ENCODE measurements at regions of chr20 and their contacts with region 1.

Region 1: DNA sequence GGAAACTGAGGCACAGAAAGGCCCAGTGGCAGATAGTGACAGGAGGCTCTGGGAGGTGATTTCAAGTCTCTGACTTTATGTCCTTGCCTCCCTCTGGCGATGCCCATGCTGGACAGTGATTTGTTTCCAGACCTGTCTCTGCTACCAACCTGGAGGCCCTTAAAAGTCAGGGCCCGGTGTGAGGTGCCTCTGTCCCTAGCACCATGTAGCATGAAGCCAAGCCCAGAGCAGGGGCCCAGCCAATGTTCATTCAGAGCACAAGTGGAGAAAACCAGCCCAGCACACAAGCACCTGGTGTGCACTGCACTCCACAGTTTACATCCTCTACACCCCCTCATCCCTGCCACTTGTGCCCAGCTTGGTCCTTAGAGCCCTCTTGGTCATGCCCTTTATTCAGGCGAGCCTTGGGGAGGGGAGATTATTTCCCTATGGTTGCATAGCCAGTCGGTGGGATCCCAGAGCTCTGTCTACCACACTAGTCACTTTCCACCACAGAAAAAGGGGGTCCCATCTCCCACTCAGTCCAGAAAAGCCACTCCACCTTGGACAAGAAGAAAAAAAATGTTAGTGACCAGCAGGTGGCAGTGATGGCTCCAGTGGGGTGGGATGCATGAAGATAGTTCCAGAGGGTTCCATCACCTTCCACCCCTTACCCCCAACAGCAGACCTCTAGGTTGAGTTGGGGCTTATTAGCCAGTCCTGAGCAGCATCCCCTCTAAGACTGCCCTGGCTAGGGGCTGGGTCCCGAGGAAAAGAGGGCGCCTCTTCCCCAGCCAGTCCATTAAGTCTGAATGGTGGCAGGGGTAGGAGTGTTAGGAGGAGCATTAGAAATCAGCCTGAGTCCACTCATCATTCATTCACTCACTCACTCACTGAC is 30.9 kb downstream of the KIAA1755 start:
- DNase-seq: peak; percentile 68
- H3K4me3 Mint-ChIP-seq: no peak overlapping the region
- H3K27ac Mint-ChIP-seq: no peak overlapping the region
- H3K4me1 Mint-ChIP-seq: no peaks in the 10 kb centered on the region
- H3K27me3 Mint-ChIP-seq: no peaks in the 10 kb centered on the region
- CTCF ChIP-seq: peak; percentile 83

Region 2: GRCh38 chr20:38304845-38305447 is 75.3 kb after region 1 on chr20:
- CTCF ChIA-PET with region 1: interaction called, 15 read pairs
- intact Hi-C with region 1: loop called (anchors 5 kb)
- DNase-seq: peak; percentile 84
- H3K4me3 Mint-ChIP-seq: no peak overlapping the region
- H3K27ac Mint-ChIP-seq: no peak overlapping the region
- H3K4me1 Mint-ChIP-seq: peaks cover 8% of the 10 kb centered on the region
- H3K27me3 Mint-ChIP-seq: peaks cover 52% of the 10 kb centered on the region
- CTCF ChIP-seq: peak; percentile 78

Region 3: GRCh38 chr20:38321959-38322598 is 92.5 kb after region 1 on chr20:
- CTCF ChIA-PET with region 1: interaction called, 13 read pairs
- intact Hi-C with region 1: loop called (anchors 1 kb)
- DNase-seq: peak; percentile 76
- H3K4me3 Mint-ChIP-seq: no peak overlapping the region
- H3K27ac Mint-ChIP-seq: no peak overlapping the region
- H3K4me1 Mint-ChIP-seq: peaks cover 17% of the 10 kb centered on the region
- H3K27me3 Mint-ChIP-seq: peaks cover 75% of the 10 kb centered on the region
- CTCF ChIP-seq: peak; percentile 71

Region 4: GRCh38 chr20:38406476-38406875 is 176.9 kb after region 1 on chr20:
- CTCF ChIA-PET with region 1: interaction called, 4 read pairs
- intact Hi-C with region 1: loop called (anchors 5 kb)
- DNase-seq: no peak
- H3K4me3 Mint-ChIP-seq: no peak overlapping the region
- H3K27ac Mint-ChIP-seq: no peak overlapping the region
- H3K4me1 Mint-ChIP-seq: peaks cover 7% of the 10 kb centered on the region
- H3K27me3 Mint-ChIP-seq: no peaks in the 10 kb centered on the region
- CTCF ChIP-seq: no peak